Posterior vena cava (tissue), 2 donors: ENCODE measurements at regions of chr3 and their contacts with region 1.

Region 1: GRCh38 chr3:162626172-162626571 is 1129.6 kb downstream of the OTOL1 start:
- DNase-seq: no peak

Region 2: GRCh38 chr3:162147996-162148395 is 478.2 kb before region 1 on chr3:
- intact Hi-C with region 1: no loop called
- DNase-seq: no peak

Region 3: DNA sequence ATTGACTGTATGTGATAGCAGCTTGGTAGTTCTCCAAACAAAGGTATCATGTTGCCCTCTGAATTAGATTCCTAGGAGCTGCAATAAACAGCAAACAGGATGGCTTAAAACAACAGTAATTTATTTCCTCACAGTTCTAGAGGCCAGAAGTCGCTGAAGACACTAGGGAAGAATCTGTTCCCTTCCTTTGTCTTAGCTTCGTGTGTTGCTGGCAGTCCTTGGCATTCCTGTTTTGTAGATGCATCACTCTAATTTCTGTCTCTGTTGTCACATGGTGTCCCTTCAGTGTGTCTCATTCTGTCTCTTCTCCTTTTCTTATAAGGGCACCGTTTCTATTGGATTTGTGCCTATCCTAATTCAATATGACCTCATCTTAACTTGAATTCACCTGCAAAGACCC is 450.3 kb before region 1 on chr3:
- intact Hi-C with region 1: loop called in 1 of 2 experiments (anchors 5 kb)
- DNase-seq: no peak